H1 (cell line): ENCODE measurements at regions of chr6 and their contacts with region 1.

Region 1: DNA sequence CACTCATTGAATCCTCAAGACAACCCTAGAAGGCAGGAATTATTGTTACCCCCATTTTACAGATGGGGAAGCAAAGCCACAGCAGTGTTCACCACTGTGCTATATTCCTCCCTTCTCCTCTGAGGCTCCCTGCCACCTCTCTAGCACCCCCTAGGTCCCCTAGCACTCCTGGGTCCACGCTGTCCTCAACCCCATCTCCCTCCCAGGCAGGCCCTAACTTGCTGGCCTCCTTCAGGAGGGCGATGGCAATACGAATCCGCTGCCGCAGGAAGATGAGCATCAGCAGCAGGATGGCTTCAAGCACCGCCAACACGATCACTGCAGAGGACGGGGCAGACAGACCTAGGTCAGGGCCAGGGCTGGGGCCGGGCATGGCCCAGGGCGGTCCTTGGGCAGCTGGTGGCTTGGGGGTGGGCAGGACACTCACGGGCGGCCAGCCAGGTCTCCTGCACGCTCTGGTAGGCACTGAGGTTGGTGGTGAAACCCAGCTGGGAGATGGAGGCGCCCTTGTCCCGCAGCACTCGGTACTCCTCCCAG is 7.8 kb upstream of the NEU1 start:
- DNase-seq: peak in 1 of 2 experiments; percentile 62
- H3K4me3 ChIP-seq: no peak overlapping the region
- H3K27ac ChIP-seq: no peak overlapping the region
- H3K4me1 ChIP-seq: peaks cover 0 to 12% (median 8%) of the 10 kb centered on the region in 4 experiments; a peak in 4 of 7 replicates
- H3K27me3 ChIP-seq: no peaks in the 10 kb centered on the region
- CTCF ChIP-seq: peak in 2 of 3 experiments; percentile 52 to 62; a peak in 3 of 4 replicates
- EP300 ChIP-seq: no peak
- POLR2A ChIP-seq: no peak
- RAD21 ChIP-seq: peak; percentile 24 to 37; a peak in 3 of 4 replicates

Region 2: GRCh38 chr6:31216208-31216898 is 654.1 kb before region 1 on chr6:
- CTCF ChIA-PET with region 1: no interaction called
- POLR2A ChIA-PET with region 1: no interaction called
- DNase-seq: no peak
- H3K4me3 ChIP-seq: no peak overlapping the region
- H3K27ac ChIP-seq: no peak overlapping the region; the same call in 1 of the 2 replicates
- H3K4me1 ChIP-seq: peaks cover 0 to 3% (median 0%) of the 10 kb centered on the region in 4 experiments; a peak in 2 of 7 replicates
- H3K27me3 ChIP-seq: no peaks in the 10 kb centered on the region
- CTCF ChIP-seq: no peak
- EP300 ChIP-seq: no peak
- POLR2A ChIP-seq: no peak
- RAD21 ChIP-seq: no peak

Region 3: DNA sequence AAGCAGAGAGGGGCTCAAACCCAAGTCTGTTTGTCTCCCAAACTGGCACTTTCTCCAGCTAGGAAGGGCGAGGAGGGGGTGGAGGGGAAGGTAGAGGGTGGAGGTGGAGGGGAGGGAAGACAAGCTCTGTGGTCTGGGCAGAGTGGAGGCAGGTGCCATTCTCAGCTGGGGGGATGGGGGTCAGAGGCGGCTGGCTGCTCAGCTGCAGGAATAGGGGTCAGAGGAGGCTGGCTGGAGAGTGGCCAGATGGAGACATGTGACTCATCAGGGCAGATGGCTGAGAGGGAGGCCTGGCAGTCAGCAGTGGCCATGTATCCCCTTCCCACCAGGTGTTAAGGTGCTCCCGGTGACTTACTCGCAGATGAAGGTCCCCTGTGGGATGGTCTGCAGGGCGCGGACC is 11.9 kb after region 1 on chr6:
- CTCF ChIA-PET with region 1: interaction called, 59 read pairs
- POLR2A ChIA-PET with region 1: interaction called, 47 read pairs
- DNase-seq: no peak
- H3K4me3 ChIP-seq: no peak overlapping the region
- H3K27ac ChIP-seq: no peak overlapping the region
- H3K4me1 ChIP-seq: peaks cover 0 to 11% (median 0%) of the 10 kb centered on the region in 4 experiments; a peak in 1 of 7 replicates
- H3K27me3 ChIP-seq: no peaks in the 10 kb centered on the region
- CTCF ChIP-seq: no peak
- EP300 ChIP-seq: no peak
- POLR2A ChIP-seq: no peak
- RAD21 ChIP-seq: no peak

Region 4: GRCh38 chr6:31888276-31889258 is 18.1 kb after region 1 on chr6:
- CTCF ChIA-PET with region 1: interaction called, 59 read pairs
- POLR2A ChIA-PET with region 1: interaction called, 10 read pairs
- DNase-seq: peak in 1 of 2 experiments; percentile 89
- H3K4me3 ChIP-seq: no peak overlapping the region
- H3K27ac ChIP-seq: no peak overlapping the region; the same call in 1 of the 2 replicates
- H3K4me1 ChIP-seq: no peaks in the 10 kb centered on the region
- H3K27me3 ChIP-seq: no peaks in the 10 kb centered on the region
- CTCF ChIP-seq: peak in 2 of 3 experiments; percentile 72 to 75; a peak in 3 of 4 replicates
- EP300 ChIP-seq: no peak
- POLR2A ChIP-seq: no peak
- RAD21 ChIP-seq: peak; percentile 50 to 70

Region 5: DNA sequence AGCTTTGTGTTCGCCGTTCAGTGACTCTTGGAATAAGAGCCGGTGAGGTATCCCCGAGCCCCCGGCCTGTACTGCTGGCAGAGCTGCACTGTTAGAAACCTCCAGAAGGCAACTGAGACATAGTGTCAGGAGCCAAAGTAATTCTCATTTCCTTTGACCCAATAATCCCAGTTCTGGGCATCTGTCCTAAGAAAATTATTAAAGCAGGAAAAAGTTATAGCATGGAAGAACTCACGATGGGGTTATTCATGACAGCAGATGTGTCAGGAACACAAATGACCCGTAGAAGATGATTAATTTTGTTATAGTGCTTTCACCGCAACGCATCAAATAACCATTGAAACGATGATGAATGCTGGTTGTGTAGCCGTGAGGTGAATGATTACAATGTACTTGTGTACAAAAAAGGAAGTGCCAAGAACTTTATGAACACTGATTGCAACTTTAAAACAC is 188.1 kb after region 1 on chr6:
- CTCF ChIA-PET with region 1: no interaction called
- POLR2A ChIA-PET with region 1: no interaction called
- DNase-seq: no peak
- H3K4me3 ChIP-seq: no peak overlapping the region
- H3K27ac ChIP-seq: no peak overlapping the region
- H3K4me1 ChIP-seq: no peaks in the 10 kb centered on the region
- H3K27me3 ChIP-seq: no peaks in the 10 kb centered on the region
- CTCF ChIP-seq: no peak
- EP300 ChIP-seq: no peak
- POLR2A ChIP-seq: no peak
- RAD21 ChIP-seq: no peak